PC-9 (cell line): ENCODE measurements at regions of chr1 and their contacts with region 1.

Region 1: GRCh38 chr1:36149237-36149972 is at the start of gene TRAPPC3:
- DNase-seq: peak; percentile 98 to 100
- H3K4me3 ChIP-seq: peak within 1 kb of the TSS; percentile 67
- H3K27ac ChIP-seq: peak within 1 kb of the TSS; percentile 95
- H3K4me1 ChIP-seq: peaks cover 34% of the 10 kb centered on the region
- H3K27me3 ChIP-seq: no peaks in the 10 kb centered on the region
- CTCF ChIP-seq: peak; percentile 89
- total RNA-seq, gene TRAPPC3: 112 and 116 TPM in 2 replicates

Region 2: GRCh38 chr1:36160949-36161485 is 11.6 kb after region 1 on chr1:
- CTCF ChIA-PET with region 1: interaction called, 12 read pairs
- POLR2A ChIA-PET with region 1: interaction called, 8 read pairs
- intact Hi-C with region 1: loop called (anchors 1 kb)
- DNase-seq: peak in 1 of 2 experiments; percentile 64
- H3K4me3 ChIP-seq: no peak overlapping the region
- H3K27ac ChIP-seq: peak overlapping the region; percentile 55
- H3K4me1 ChIP-seq: peaks cover 51% of the 10 kb centered on the region
- H3K27me3 ChIP-seq: no peaks in the 10 kb centered on the region
- CTCF ChIP-seq: no peak

Region 3: DNA sequence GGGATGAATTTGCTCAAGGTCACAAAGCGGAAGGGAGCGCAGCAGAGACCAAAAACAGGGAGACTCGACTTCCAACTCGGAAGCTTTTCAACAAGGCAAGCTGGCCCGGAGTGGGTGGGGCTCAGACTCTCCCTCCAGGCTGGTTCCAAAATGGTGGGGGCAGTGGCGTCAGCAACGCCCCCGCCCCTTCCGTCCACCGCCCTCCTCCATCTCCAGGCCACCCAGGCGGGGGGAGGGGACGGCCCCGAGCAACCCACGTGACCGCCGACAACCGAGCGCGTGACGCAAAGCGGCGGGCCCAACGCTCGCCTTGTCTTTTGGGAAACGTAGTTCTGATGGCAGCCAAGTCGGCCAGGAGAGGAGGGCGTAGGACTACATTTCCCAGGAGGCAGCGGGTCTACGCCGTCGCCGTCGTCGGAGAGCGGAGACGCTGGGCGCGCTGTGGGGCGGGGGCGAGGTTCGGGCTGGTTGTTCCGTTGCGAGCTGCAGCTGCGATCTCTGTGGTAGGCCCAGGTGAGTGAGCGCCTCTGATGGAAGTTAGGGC is 74.7 kb after region 1 on chr1 and contains the start of gene THRAP3:
- CTCF ChIA-PET with region 1: interaction called, 6 read pairs
- POLR2A ChIA-PET with region 1: no interaction called
- intact Hi-C with region 1: loop called (anchors 1 kb)
- DNase-seq: peak; percentile 97 to 100
- H3K4me3 ChIP-seq: peak within 1 kb of the TSS; percentile 95
- H3K27ac ChIP-seq: peak within 1 kb of the TSS; percentile 86
- H3K4me1 ChIP-seq: peaks cover 12% of the 10 kb centered on the region
- H3K27me3 ChIP-seq: no peaks in the 10 kb centered on the region
- CTCF ChIP-seq: no peak
- total RNA-seq, gene THRAP3: 83.2 and 143 TPM in 2 replicates

Region 4: DNA sequence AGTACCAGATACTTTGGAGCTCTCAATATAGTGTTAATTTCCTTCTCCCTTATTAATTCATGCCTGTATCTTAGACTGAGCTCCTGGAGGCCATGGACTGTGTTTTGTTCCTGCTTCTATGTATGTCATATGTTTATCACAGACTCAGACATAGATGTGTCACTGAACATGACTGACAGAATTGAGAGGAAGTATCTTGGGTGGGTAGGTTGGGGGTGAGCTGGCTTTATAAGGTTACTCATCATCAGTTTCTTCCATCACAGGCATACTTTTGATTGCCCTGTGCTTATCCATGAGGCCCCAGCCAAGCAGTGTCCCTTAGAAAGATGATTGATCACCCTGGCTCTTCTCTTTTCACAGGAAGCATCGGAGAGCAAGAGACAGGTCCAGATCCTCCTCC is 151.1 kb after region 1 on chr1:
- CTCF ChIA-PET with region 1: interaction called, 5 read pairs
- POLR2A ChIA-PET with region 1: interaction called, 10 read pairs
- intact Hi-C with region 1: no loop called
- DNase-seq: peak in 1 of 2 experiments; percentile 60
- H3K4me3 ChIP-seq: no peak overlapping the region
- H3K27ac ChIP-seq: peak overlapping the region; percentile 89
- H3K4me1 ChIP-seq: peaks cover 32% of the 10 kb centered on the region
- H3K27me3 ChIP-seq: no peaks in the 10 kb centered on the region
- CTCF ChIP-seq: no peak

Region 5: GRCh38 chr1:36420836-36421664 is 271.6 kb after region 1 on chr1:
- CTCF ChIA-PET with region 1: no interaction called
- POLR2A ChIA-PET with region 1: no interaction called
- intact Hi-C with region 1: loop called (anchors 1 kb)
- DNase-seq: peak; percentile 72 to 93
- H3K4me3 ChIP-seq: no peak overlapping the region
- H3K27ac ChIP-seq: no peak overlapping the region
- H3K4me1 ChIP-seq: peaks cover 23% of the 10 kb centered on the region
- H3K27me3 ChIP-seq: no peaks in the 10 kb centered on the region
- CTCF ChIP-seq: peak; percentile 91